ENCODE measurements at regions of chr10 and their contacts with region 1.

Region 1: DNA sequence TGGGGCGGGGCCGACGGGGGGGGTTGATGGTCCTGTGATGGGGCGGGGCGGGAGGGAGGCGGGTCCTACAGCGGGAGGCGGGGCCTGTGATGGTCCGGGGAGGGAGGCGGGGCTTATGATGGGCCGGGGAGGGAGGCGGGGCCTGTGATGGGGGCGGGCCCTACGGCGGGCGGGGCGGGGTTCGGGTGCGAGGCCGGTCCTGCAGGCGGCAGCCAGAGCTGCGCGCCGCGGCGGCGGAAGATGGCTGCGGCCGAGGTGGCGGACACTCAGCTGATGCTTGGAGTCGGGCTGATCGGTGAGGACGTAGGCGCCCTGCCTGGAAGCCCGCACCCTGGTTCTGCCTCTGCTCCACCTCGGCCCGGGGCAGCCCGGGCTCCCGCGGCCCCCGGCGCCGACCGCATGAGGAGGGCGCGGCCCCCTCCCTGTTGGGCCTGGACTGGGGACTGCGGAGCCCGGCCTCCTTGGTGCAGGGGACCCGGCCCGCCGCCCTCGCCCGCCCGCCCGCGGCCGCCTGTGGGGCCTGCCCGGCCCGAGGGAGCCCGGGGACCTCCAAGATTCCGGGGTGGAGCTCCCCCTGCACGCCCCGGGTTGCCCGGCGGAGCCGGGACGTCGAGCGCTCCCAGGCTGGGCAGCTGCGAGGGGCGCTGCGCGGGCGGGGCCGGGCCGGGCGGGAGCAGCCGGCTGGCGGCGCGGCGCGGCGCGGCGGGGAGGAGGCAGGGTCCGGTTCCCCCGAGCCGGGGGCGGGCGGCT is at the start of gene DENND10:
- DNase-seq: peak; percentile 64 to 95 (median 87)

Region 2: DNA sequence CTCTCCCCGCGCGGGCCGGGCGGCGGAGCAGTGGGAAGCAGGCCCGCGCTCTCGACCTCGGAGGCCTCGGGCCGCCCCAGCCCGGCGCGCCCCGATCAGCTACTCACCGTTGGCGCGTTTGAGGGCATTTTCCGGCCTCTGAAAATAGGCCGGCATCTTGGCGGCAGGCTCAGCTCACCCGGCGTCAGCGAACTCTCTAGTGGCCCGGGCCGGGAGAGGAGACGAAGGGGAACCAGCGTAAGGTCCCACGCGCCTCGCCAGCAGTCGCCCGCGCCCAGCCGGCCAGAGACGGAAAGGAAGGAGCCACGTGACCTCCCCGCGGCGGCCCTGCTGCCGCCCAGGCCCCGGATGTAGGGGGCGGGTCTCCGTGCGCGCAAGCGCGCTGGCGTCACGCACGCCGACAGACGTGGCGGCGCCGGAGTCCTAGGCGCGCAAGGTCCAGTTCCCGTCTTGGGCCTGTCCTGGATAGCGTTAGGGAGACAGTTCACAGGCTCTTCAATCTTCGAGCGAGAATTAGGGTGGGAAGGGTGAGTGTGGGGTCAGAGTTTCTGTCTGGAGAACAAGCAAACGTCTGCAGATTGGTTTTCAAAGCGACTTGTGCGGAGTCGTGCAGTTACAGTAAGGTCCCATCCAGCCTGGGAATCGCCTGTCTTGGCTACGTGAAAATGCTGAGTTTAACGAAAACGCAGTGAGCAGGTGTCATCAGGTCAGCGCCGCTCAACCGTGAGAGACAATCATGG is 23.4 kb before region 1 on chr10 and contains the start of gene EIF3A:
- intact Hi-C with region 1: loop called (anchors 2 kb)
- DNase-seq: peak; percentile 77 to 97 (median 92)

Measured in head of caudate nucleus (tissue), 42 donors.